HepG2 (cell line): ENCODE measurements at regions of chr12 and their contacts with region 1.

Region 1: DNA sequence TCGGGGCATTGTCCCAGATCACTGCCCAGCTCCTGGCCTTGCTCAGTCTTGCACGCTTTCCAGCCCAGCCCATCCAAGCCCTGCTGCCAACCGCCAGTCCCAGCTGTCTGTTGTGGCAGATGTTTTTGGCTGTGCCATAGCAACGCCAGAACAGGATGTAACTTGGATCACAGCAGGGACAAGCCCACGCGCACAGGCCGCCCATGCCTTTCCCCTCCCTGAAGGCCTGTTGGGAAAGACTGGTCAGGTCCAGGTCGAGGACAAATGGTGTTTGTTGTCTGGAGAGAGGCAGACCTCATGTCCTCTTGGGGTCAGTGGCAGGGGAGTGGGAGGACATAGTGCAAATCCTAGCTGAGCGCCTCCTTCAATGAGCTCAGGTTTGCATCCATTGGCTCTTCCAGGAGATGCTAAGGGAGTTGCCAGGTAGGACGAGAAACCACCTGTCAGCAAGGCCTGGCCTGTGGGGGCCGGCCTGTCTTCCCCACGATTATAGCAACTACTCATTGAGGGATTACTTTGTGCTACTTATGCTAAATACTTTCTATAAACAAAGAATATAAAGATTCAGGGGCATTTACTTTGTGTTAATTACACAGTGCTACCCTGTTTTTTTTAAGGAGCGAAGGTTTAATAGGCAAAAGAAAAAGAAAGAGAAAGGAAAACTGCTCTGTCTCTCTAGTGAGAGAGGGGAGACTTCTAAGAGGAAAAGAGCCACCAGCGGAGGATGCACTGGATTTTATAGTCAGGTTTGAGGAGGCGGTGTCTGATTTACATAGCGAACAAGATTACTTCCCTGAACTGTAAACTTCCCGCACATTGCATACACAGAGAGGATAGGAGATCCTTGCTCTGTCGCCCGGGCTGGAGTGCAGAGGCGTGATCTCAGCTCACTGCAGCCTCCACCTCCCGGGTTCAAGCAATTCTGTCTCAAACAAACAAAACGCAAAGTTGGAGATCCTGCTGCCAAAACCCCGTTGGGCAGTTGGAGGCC is 42.8 kb upstream of the CORO1C start:
- DNase-seq: peak; percentile 96
- ATAC-seq: peak; percentile 92
- H3K4me3 ChIP-seq: peak overlapping the region; percentile 46 to 74 (median 69)
- H3K27ac ChIP-seq: peak overlapping the region; percentile 45
- H3K4me1 ChIP-seq: peaks cover 66% of the 10 kb centered on the region
- H3K27me3 ChIP-seq: no peaks in the 10 kb centered on the region
- CTCF ChIP-seq: peak; percentile 32; the same call in 1 of the 2 replicates
- EP300 ChIP-seq: peak; percentile 72 to 89; a peak in 3 of 4 replicates
- POLR2A ChIP-seq: peak in 1 of 2 experiments; percentile 47; a peak in 1 of 4 replicates
- RAD21 ChIP-seq: no peak

Region 2: GRCh38 chr12:108691175-108691997 is 82.7 kb before region 1 on chr12:
- CTCF ChIA-PET with region 1: no interaction called
- POLR2A ChIA-PET with region 1: no interaction called
- in situ Hi-C with region 1: no loop called
- intact Hi-C with region 1: loop called (anchors 5 kb)
- DNase-seq: peak; percentile 96
- ATAC-seq: peak; percentile 97
- H3K4me3 ChIP-seq: peak overlapping the region in 2 of 3 experiments; percentile 22 to 49; a peak in 3 of 6 replicates
- H3K27ac ChIP-seq: peak overlapping the region; percentile 86
- H3K4me1 ChIP-seq: peaks cover 55% of the 10 kb centered on the region
- H3K27me3 ChIP-seq: no peaks in the 10 kb centered on the region
- CTCF ChIP-seq: peak; percentile 29; the same call in 1 of the 2 replicates
- EP300 ChIP-seq: peak; percentile 37 to 51; a peak in 2 of 4 replicates
- POLR2A ChIP-seq: peak in 1 of 2 experiments; percentile 73; a peak in 2 of 4 replicates
- RAD21 ChIP-seq: no peak

Region 3: DNA sequence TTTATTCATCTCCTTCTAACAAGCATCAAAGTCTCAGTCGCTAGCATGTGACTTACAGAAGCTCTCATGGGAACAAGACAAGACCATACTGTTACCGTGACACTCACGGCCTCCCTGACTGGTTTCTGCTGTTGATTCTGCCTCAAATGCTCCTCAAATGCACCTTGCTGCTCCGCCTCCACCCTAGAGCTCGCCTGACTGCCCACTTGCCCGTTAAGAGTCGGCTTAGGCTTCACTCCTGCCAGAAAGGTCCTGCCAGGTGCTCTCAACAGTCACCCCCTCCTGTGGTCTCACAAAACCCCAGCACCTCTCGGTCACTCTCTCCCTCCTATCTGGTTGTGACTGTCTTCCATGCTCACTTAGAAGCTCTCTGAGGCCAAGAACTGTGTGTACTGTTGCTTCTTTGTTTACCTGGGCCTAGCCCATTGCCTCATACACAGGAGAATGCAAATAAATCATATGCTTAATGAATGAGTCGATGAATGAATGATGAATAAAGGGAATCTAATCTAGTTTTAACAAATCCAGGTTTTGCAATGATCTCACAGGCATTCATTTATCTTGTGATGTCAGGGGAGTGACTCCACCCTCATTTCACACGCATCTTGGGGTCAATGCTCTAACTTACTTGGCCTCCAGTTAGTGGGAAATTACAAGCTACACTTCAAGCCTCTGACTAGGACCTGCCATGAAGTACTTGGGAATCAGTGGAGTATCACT is 41.9 kb after region 1 on chr12:
- CTCF ChIA-PET with region 1: no interaction called
- POLR2A ChIA-PET with region 1: no interaction called
- in situ Hi-C with region 1: no loop called
- intact Hi-C with region 1: no loop called
- DNase-seq: no peak
- ATAC-seq: no peak
- H3K4me3 ChIP-seq: no peak overlapping the region
- H3K27ac ChIP-seq: no peak overlapping the region
- H3K4me1 ChIP-seq: peaks cover 14% of the 10 kb centered on the region
- H3K27me3 ChIP-seq: no peaks in the 10 kb centered on the region
- CTCF ChIP-seq: no peak
- EP300 ChIP-seq: no peak
- POLR2A ChIP-seq: no peak
- RAD21 ChIP-seq: no peak